ENCODE measurements at regions of chr11 and their contacts with region 1.

Region 1: DNA sequence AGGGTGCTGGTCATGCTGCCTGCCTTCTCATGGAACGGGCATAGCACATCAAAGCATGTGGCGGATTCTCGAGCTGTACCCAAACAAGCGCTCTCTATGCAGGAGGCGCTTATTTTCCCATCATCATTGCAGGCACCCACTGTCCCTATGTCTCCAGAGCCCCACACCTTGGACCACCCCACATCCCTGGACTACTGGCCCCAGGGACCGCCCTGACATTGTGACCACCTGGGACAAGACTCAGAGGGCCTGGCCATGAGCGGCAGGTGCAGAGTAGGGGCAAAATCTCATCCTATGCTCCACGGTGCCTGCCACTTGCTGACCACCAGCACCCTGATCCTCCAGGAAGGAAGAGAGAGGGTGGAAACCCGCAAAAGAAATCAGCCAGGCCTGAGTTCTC is 170.4 kb downstream of the DSCAML1 start:
- DNase-seq: no peak
- ATAC-seq: no peak
- H3K4me3 ChIP-seq: no peak overlapping the region
- H3K4me3 Mint-ChIP-seq: no peak overlapping the region
- H3K27ac ChIP-seq: no peak overlapping the region
- H3K27ac Mint-ChIP-seq: no peak overlapping the region
- H3K4me1 ChIP-seq: no peaks in the 10 kb centered on the region
- H3K4me1 Mint-ChIP-seq: no peaks in the 10 kb centered on the region
- H3K27me3 ChIP-seq: peaks cover 0 to 16% of the 10 kb centered on the region in 2 experiments
- H3K27me3 Mint-ChIP-seq: peaks cover 11 to 13% of the 10 kb centered on the region in 2 donors

Region 2: DNA sequence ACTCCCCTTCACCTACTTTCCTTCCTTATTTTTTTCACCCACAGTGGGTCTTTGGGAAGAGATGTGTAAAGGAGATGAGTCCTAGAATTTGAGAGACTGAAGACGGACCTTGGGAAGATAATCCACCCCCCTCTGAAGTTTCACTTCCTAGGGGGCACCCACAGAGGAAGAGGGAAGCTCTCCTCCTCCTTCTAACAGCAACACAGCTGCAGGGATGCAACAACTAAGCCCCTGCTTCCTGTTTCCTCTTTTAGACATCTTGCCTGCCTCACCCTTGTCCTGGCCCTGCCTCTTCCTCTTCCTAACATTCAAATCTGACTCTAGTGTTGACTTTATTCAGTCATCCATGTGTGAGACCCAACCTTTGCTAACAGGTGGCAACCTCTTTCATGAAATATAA is 1278.3 kb before region 1 on chr11:
- CTCF ChIA-PET with region 1: no interaction called
- POLR2A ChIA-PET with region 1: no interaction called
- DNase-seq: no peak
- ATAC-seq: no peak
- H3K4me3 ChIP-seq: no peak overlapping the region
- H3K4me3 Mint-ChIP-seq: no peak overlapping the region
- H3K27ac ChIP-seq: no peak overlapping the region
- H3K27ac Mint-ChIP-seq: no peak overlapping the region
- H3K4me1 ChIP-seq: no peaks in the 10 kb centered on the region
- H3K4me1 Mint-ChIP-seq: peaks cover 0 to 6% (median 0%) of the 10 kb centered on the region in 3 donors
- H3K27me3 ChIP-seq: peaks cover 0 to 3% of the 10 kb centered on the region in 2 experiments
- H3K27me3 Mint-ChIP-seq: no peaks in the 10 kb centered on the region

Region 3: GRCh38 chr11:117796872-117797529 is 170.4 kb after region 1 on chr11 and contains the start of gene DSCAML1:
- CTCF ChIA-PET with region 1: no interaction called
- POLR2A ChIA-PET with region 1: interaction called in 1 of 2 experiments, 11 read pairs
- DNase-seq: peak in 21 of 35 experiments; percentile 12 to 58 (median 33)
- ATAC-seq: peak; percentile 80 to 93 (median 86)
- H3K4me3 ChIP-seq: peak within 1 kb of the TSS; percentile 30 to 49
- H3K4me3 Mint-ChIP-seq: peak within 1 kb of the TSS; percentile 58 to 71 (median 65)
- H3K27ac ChIP-seq: no peak within 1 kb of the TSS
- H3K27ac Mint-ChIP-seq: no peak within 1 kb of the TSS
- H3K4me1 ChIP-seq: peaks cover 0 to 23% of the 10 kb centered on the region in 2 experiments
- H3K4me1 Mint-ChIP-seq: peaks cover 11 to 21% (median 20%) of the 10 kb centered on the region in 3 donors
- H3K27me3 ChIP-seq: peaks cover 9 to 66% of the 10 kb centered on the region in 2 experiments
- H3K27me3 Mint-ChIP-seq: peaks cover 53 to 62% of the 10 kb centered on the region in 2 donors
- total RNA-seq, gene DSCAML1: 0.15 to 2.4 (median 0.96) TPM

Region 4: DNA sequence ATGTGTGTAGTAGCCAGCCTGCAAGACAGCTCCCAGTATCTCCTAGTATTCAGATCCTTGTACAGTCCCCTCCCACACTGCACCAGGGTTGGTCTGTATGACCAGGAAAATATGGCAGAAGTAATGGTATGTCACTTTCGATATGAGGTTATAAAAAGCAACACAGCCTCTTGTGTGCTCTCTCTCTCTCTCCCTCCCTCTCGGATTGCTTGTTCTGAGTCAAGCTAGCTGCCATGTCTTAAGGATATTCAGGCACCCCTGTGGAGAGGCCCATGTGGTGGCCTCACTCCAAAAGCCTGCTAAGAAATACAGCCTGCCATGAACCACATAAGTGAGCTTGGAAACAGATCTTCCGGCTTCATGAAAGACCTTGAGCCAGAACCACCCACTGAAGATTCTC is 224.5 kb after region 1 on chr11:
- CTCF ChIA-PET with region 1: no interaction called
- POLR2A ChIA-PET with region 1: no interaction called
- DNase-seq: no peak
- ATAC-seq: no peak
- H3K4me3 ChIP-seq: no peak overlapping the region
- H3K4me3 Mint-ChIP-seq: no peak overlapping the region
- H3K27ac ChIP-seq: no peak overlapping the region
- H3K27ac Mint-ChIP-seq: no peak overlapping the region
- H3K4me1 ChIP-seq: peaks cover 0 to 6% of the 10 kb centered on the region in 2 experiments
- H3K4me1 Mint-ChIP-seq: peaks cover 5 to 7% (median 6%) of the 10 kb centered on the region in 3 donors
- H3K27me3 ChIP-seq: peaks cover 0 to 2% of the 10 kb centered on the region in 2 experiments
- H3K27me3 Mint-ChIP-seq: peaks cover 6 to 19% of the 10 kb centered on the region in 2 donors